ENCODE measurements at regions of chr6 and their contacts with region 1.

Region 1: GRCh38 chr6:27753668-27754407 is 158.4 kb downstream of the OR2B2 start:
- DNase-seq: peak; percentile 89
- ATAC-seq: peak; percentile 70
- H3K4me3 Mint-ChIP-seq: peak overlapping the region; percentile 98
- H3K27ac Mint-ChIP-seq: peak overlapping the region; percentile 81
- H3K4me1 Mint-ChIP-seq: peaks cover 31% of the 10 kb centered on the region
- H3K27me3 Mint-ChIP-seq: peaks cover 3% of the 10 kb centered on the region

Region 2: GRCh38 chr6:27157459-27158315 is 596.2 kb before region 1 on chr6:
- CTCF ChIA-PET with region 1: interaction called, 3 read pairs
- POLR2A ChIA-PET with region 1: interaction called, 3 read pairs
- intact Hi-C with region 1: loop called in 1 of 2 experiments (anchors 1 kb)
- DNase-seq: peak; percentile 91
- ATAC-seq: peak; percentile 84
- H3K4me3 Mint-ChIP-seq: peak overlapping the region; percentile 78
- H3K27ac Mint-ChIP-seq: peak overlapping the region; percentile 92
- H3K4me1 Mint-ChIP-seq: peaks cover 46% of the 10 kb centered on the region
- H3K27me3 Mint-ChIP-seq: no peaks in the 10 kb centered on the region

Region 3: GRCh38 chr6:27388293-27389197 is 365.3 kb before region 1 on chr6 and contains the start of gene ZNF391:
- CTCF ChIA-PET with region 1: no interaction called
- POLR2A ChIA-PET with region 1: no interaction called
- intact Hi-C with region 1: loop called in 1 of 2 experiments (anchors 5 kb)
- DNase-seq: peak; percentile 81
- ATAC-seq: peak; percentile 95
- H3K4me3 Mint-ChIP-seq: peak within 1 kb of the TSS; percentile 95
- H3K27ac Mint-ChIP-seq: peak within 1 kb of the TSS; percentile 93
- H3K4me1 Mint-ChIP-seq: peaks cover 14% of the 10 kb centered on the region
- H3K27me3 Mint-ChIP-seq: peaks cover 6% of the 10 kb centered on the region
- total RNA-seq, gene ZNF391: 4.3 to 6.2 TPM

Region 4: DNA sequence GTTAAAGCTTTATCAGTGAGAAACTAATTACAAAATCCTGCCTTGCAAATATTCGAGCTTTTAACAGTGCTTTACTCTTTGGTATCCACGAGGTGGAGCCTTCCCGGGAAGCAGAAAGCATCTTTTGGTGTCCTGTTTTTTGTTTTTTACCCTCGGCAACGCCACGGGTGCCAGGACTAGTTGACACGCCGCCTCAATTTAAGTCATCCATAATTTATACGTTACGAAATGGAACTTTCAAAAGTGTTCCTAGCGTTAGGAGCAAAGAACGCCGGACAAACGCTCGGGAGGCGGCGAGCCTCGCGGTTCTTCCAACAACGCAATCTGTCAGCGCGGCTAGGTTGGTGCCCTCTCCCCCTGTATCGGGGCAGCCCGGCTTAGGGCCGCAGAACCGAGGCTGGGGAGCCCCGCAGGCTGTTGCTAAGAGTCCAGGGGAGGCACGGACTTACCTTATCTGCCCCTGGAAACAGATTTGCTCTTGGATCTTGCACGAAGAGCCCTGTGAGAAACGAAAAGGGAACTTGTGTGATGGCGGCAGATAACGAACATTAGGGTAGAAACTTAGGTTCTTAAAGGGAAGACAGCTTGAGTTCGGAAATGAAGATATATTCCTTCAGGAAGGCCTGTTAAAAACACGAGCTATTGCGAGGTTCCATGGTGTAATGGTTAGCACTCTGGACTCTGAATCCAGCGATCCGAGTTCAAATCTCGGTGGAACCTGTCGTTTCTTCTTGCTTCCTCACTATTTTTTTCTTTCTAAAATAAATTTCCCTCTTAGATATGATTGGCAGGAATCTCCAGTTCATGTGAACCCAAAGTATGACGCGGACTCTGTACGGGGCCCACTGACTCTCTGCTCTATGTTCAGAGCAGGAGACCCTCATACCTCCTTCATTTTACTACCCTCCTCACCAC is 234.7 kb before region 1 on chr6:
- CTCF ChIA-PET with region 1: interaction called, 19 read pairs
- POLR2A ChIA-PET with region 1: no interaction called
- intact Hi-C with region 1: loop called (anchors 1 kb)
- DNase-seq: peak; percentile 75
- ATAC-seq: peak; percentile 83
- H3K4me3 Mint-ChIP-seq: peak overlapping the region; percentile 80
- H3K27ac Mint-ChIP-seq: peak overlapping the region; percentile 80
- H3K4me1 Mint-ChIP-seq: peaks cover 15% of the 10 kb centered on the region
- H3K27me3 Mint-ChIP-seq: peaks cover 16% of the 10 kb centered on the region

Region 5: GRCh38 chr6:27772261-27773001 is 18.6 kb after region 1 on chr6:
- CTCF ChIA-PET with region 1: interaction called, 60 read pairs
- POLR2A ChIA-PET with region 1: interaction called, 4 read pairs
- intact Hi-C with region 1: loop called in 1 of 2 experiments (anchors 1 kb)
- DNase-seq: peak; percentile 94
- ATAC-seq: peak; percentile 95
- H3K4me3 Mint-ChIP-seq: peak overlapping the region; percentile 14
- H3K27ac Mint-ChIP-seq: peak overlapping the region; percentile 56
- H3K4me1 Mint-ChIP-seq: peaks cover 9% of the 10 kb centered on the region
- H3K27me3 Mint-ChIP-seq: peaks cover 8% of the 10 kb centered on the region

Region 6: GRCh38 chr6:27902335-27903314 is 148.8 kb after region 1 on chr6:
- CTCF ChIA-PET with region 1: no interaction called
- POLR2A ChIA-PET with region 1: no interaction called
- intact Hi-C with region 1: loop called (anchors 1 to 5 kb)
- DNase-seq: peak; percentile 91
- ATAC-seq: peak; percentile 81
- H3K4me3 Mint-ChIP-seq: peak overlapping the region; percentile 74
- H3K27ac Mint-ChIP-seq: peak overlapping the region; percentile 89
- H3K4me1 Mint-ChIP-seq: peaks cover 5% of the 10 kb centered on the region
- H3K27me3 Mint-ChIP-seq: peaks cover 4% of the 10 kb centered on the region

Measured in activated CD4-positive, alpha-beta T cell treated with anti-CD3 and anti-CD28 coated beads for 36 hours (primary cell).